ENCODE measurements at regions of chr14 and their contacts with region 1.

Region 1: GRCh38 chr14:61329478-61330051 is 8.2 kb downstream of the PRKCH start:
- DNase-seq: peak; percentile 59
- ATAC-seq: peak; percentile 76
- H3K4me3 ChIP-seq: peak overlapping the region; percentile 39
- H3K27ac ChIP-seq: peak overlapping the region; percentile 82
- H3K4me1 ChIP-seq: peaks cover 25% of the 10 kb centered on the region
- H3K27me3 ChIP-seq: no peaks in the 10 kb centered on the region
- CTCF ChIP-seq: no peak
- EP300 ChIP-seq: peak in 1 of 2 experiments; percentile 88; a peak in 2 of 4 replicates
- POLR2A ChIP-seq: no peak
- RAD21 ChIP-seq: no peak

Region 2: DNA sequence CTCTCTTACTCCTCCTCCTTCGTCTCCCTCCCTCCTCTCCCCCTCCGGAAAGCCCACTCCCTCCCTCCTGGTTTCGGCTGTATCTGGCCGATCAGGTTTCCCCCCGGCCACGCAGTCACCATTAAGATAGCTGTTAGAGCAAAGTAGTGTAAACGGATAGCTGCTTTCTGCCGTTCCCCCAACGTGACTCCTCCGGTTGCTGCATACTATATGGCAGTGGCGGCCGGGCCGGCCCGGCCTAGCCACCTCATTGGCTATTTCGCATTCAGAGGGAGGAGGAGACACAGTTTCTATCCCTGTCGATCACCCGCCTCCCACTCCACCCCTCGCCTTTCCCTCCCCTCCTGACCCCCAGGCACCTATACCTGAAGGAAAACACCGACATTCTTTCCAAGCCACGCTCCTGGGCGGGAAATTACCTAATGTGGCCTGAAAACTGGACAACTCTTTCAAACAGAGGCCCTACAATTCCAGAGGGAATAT is 605.4 kb before region 1 on chr14 and contains the start of gene SIX4:
- CTCF ChIA-PET with region 1: no interaction called
- POLR2A ChIA-PET with region 1: no interaction called
- RAD21 ChIA-PET with region 1: no interaction called
- SMC1A ChIA-PET with region 1: no interaction called
- in situ Hi-C with region 1: no loop called
- intact Hi-C with region 1: no loop called
- DNase-seq: no peak
- ATAC-seq: peak; percentile 66
- H3K4me3 ChIP-seq: peak within 1 kb of the TSS; percentile 72
- H3K27ac ChIP-seq: no peak within 1 kb of the TSS
- H3K4me1 ChIP-seq: no peaks in the 10 kb centered on the region
- H3K27me3 ChIP-seq: peaks cover 16 to 28% of the 10 kb centered on the region in 2 experiments
- CTCF ChIP-seq: no peak
- EP300 ChIP-seq: no peak
- POLR2A ChIP-seq: no peak
- RAD21 ChIP-seq: no peak
- polyA plus RNA-seq, gene SIX4: not detected

Region 3: GRCh38 chr14:61342486-61342885 is 12.9 kb after region 1 on chr14:
- CTCF ChIA-PET with region 1: interaction called, 8 read pairs
- POLR2A ChIA-PET with region 1: interaction called, 74 read pairs
- RAD21 ChIA-PET with region 1: interaction called, 20 read pairs
- SMC1A ChIA-PET with region 1: interaction called, 48 read pairs
- in situ Hi-C with region 1: no loop called
- intact Hi-C with region 1: no loop called
- DNase-seq: peak; percentile 67
- ATAC-seq: peak; percentile 70
- H3K4me3 ChIP-seq: peak overlapping the region; percentile 57
- H3K27ac ChIP-seq: peak overlapping the region; percentile 74
- H3K4me1 ChIP-seq: peaks cover 63% of the 10 kb centered on the region
- H3K27me3 ChIP-seq: no peaks in the 10 kb centered on the region
- CTCF ChIP-seq: no peak
- EP300 ChIP-seq: peak; percentile 32 to 44; a peak in 1 of 4 replicates
- POLR2A ChIP-seq: no peak
- RAD21 ChIP-seq: no peak

Region 4: GRCh38 chr14:61360796-61361525 is 31.4 kb after region 1 on chr14:
- CTCF ChIA-PET with region 1: interaction called, 3 read pairs
- POLR2A ChIA-PET with region 1: interaction called, 3 read pairs
- RAD21 ChIA-PET with region 1: interaction called, 3 read pairs
- SMC1A ChIA-PET with region 1: interaction called, 10 read pairs
- in situ Hi-C with region 1: no loop called
- intact Hi-C with region 1: no loop called
- DNase-seq: no peak
- ATAC-seq: peak; percentile 42
- H3K4me3 ChIP-seq: no peak overlapping the region
- H3K27ac ChIP-seq: no peak overlapping the region
- H3K4me1 ChIP-seq: peaks cover 21% of the 10 kb centered on the region
- H3K27me3 ChIP-seq: no peaks in the 10 kb centered on the region
- CTCF ChIP-seq: no peak
- EP300 ChIP-seq: no peak
- POLR2A ChIP-seq: no peak
- RAD21 ChIP-seq: no peak

Region 5: GRCh38 chr14:61388173-61388975 is 58.8 kb after region 1 on chr14:
- CTCF ChIA-PET with region 1: interaction called, 6 read pairs
- POLR2A ChIA-PET with region 1: interaction called, 38 read pairs
- RAD21 ChIA-PET with region 1: interaction called, 62 read pairs
- SMC1A ChIA-PET with region 1: interaction called, 64 read pairs
- in situ Hi-C with region 1: no loop called
- intact Hi-C with region 1: no loop called
- DNase-seq: peak; percentile 86
- ATAC-seq: peak; percentile 74
- H3K4me3 ChIP-seq: peak overlapping the region; percentile 24; the same call in 1 of the 2 replicates
- H3K27ac ChIP-seq: peak overlapping the region; percentile 99
- H3K4me1 ChIP-seq: peaks cover 76% of the 10 kb centered on the region
- H3K27me3 ChIP-seq: no peaks in the 10 kb centered on the region
- CTCF ChIP-seq: no peak
- EP300 ChIP-seq: peak; percentile 90 to 93
- POLR2A ChIP-seq: peak; percentile 63
- RAD21 ChIP-seq: no peak

Region 6: DNA sequence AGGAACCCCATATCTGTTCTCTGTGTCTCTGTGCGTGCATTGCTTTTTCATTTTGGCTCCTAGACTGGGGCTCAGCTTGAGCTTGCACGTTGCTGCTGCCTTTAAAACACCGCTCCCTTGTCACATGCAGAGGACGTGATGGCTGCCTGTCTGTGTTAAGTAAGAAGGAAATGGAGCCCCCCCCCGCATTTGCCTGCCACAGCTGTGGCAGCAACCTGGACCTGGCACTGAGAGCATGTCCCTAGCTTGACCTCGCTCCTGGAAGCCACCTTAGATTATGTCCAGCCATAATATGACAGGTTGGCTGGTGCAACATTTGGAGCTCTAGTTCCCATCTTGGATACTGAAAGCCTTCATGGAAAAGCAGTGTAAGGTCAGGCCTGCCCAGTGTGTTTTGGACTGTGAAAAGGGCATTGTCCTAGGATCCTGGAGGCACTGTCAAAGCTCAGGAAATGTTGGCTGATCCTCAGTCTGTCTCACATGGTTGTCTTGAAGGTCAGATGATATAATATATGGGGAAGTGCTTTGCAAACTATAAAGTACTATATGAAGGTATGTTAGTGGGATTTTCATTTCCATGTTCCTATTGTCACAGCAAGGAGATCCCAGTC is 65.7 kb after region 1 on chr14:
- CTCF ChIA-PET with region 1: no interaction called
- POLR2A ChIA-PET with region 1: interaction called, 38 read pairs
- RAD21 ChIA-PET with region 1: interaction called, 62 read pairs
- SMC1A ChIA-PET with region 1: interaction called, 64 read pairs
- in situ Hi-C with region 1: no loop called
- intact Hi-C with region 1: no loop called
- DNase-seq: no peak
- ATAC-seq: no peak
- H3K4me3 ChIP-seq: no peak overlapping the region
- H3K27ac ChIP-seq: no peak overlapping the region
- H3K4me1 ChIP-seq: peaks cover 22% of the 10 kb centered on the region
- H3K27me3 ChIP-seq: no peaks in the 10 kb centered on the region
- CTCF ChIP-seq: no peak
- EP300 ChIP-seq: no peak
- POLR2A ChIP-seq: no peak
- RAD21 ChIP-seq: no peak

Region 7: DNA sequence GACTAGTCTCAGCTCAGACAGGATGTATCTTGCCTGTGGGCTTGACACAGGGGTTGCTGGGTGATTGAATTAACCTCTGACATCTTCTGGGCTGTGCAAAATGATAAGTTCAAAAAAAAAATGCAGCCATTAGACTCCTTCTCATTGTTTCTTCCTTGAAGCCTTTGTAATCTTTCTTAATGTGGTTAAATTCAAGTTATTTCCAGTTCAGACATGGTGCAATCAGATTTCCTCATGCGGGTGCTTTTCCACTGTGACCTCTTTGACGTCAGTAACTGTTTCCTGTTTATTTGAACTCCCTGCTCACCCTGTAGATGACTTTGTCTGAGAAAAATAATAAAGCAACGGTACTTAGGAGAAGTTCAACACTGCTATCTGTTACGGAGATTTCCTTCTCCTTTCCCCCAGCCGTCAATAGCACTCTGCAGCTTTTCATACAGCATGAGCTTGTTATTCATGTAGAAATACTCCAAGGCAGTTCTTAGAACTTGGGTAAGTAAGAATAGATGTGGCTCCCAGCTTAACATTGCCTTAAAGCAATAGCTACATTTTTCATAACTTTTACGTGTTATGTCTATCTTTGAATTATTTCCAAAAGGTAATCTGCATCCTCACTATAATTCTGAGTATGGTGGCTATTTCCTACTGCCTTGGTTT is 147.3 kb after region 1 on chr14:
- CTCF ChIA-PET with region 1: no interaction called
- POLR2A ChIA-PET with region 1: no interaction called
- RAD21 ChIA-PET with region 1: no interaction called
- SMC1A ChIA-PET with region 1: no interaction called
- in situ Hi-C with region 1: no loop called
- intact Hi-C with region 1: no loop called
- DNase-seq: no peak
- ATAC-seq: peak; percentile 43
- H3K4me3 ChIP-seq: no peak overlapping the region
- H3K27ac ChIP-seq: peak overlapping the region; percentile 85
- H3K4me1 ChIP-seq: peaks cover 53% of the 10 kb centered on the region
- H3K27me3 ChIP-seq: no peaks in the 10 kb centered on the region
- CTCF ChIP-seq: no peak
- EP300 ChIP-seq: peak in 1 of 2 experiments; percentile 58; a peak in 1 of 4 replicates
- POLR2A ChIP-seq: no peak
- RAD21 ChIP-seq: no peak

Measured in GM12878 (cell line).